B cell (primary cell): ENCODE measurements at regions of chr16 and their contacts with region 1.

Region 1: GRCh38 chr16:57576429-57576870 is 34.0 kb downstream of the ADGRG5 start:
- DNase-seq: peak; percentile 83
- ATAC-seq: peak; percentile 93
- H3K4me3 ChIP-seq: no peak overlapping the region
- H3K4me3 Mint-ChIP-seq: no peak overlapping the region
- H3K27ac ChIP-seq: no peak overlapping the region
- H3K27ac Mint-ChIP-seq: peak overlapping the region; percentile 39
- H3K4me1 ChIP-seq: peaks cover 0 to 7% of the 10 kb centered on the region in 2 donors
- H3K4me1 Mint-ChIP-seq: peaks cover 18% of the 10 kb centered on the region
- H3K27me3 ChIP-seq: no peaks in the 10 kb centered on the region
- H3K27me3 Mint-ChIP-seq: no peaks in the 10 kb centered on the region
- CTCF ChIP-seq: peak; percentile 95

Region 2: DNA sequence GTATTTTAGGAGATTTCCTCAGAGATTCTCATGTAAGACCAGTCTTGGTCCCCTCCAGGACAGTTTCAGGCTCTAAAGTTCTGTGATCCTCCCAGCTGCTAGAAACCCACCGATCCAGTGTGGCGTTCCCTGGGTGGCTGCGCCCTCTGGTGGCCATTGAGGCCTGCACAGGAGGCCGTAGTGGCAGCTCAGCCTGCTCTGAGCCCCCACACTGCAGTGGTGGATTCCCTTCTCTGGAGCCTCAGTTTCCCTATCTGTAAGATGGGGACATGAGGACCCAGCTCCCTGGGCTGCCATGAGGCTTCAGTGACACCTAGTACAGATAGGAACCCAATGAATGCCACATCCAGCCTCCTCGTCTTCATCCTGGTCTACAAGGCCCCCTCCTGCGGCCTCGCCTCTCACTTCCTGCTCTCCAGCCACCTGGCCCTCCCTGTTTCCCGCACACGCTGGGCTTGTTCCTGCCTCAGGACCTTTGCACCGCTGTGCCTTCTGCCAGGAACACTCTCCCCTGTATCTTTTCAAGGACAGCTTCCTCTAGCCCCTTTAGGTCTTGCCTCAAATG is 56.6 kb before region 1 on chr16:
- CTCF ChIA-PET with region 1: interaction called, 111 read pairs
- POLR2A ChIA-PET with region 1: interaction called, 3 read pairs
- intact Hi-C with region 1: loop called (anchors 1 kb)
- DNase-seq: peak; percentile 83
- ATAC-seq: peak; percentile 76
- H3K4me3 ChIP-seq: no peak overlapping the region
- H3K4me3 Mint-ChIP-seq: no peak overlapping the region
- H3K27ac ChIP-seq: no peak overlapping the region
- H3K27ac Mint-ChIP-seq: no peak overlapping the region
- H3K4me1 ChIP-seq: peaks cover 26 to 39% of the 10 kb centered on the region in 2 donors
- H3K4me1 Mint-ChIP-seq: peaks cover 38% of the 10 kb centered on the region
- H3K27me3 ChIP-seq: no peaks in the 10 kb centered on the region
- H3K27me3 Mint-ChIP-seq: no peaks in the 10 kb centered on the region
- CTCF ChIP-seq: peak; percentile 98

Region 3: DNA sequence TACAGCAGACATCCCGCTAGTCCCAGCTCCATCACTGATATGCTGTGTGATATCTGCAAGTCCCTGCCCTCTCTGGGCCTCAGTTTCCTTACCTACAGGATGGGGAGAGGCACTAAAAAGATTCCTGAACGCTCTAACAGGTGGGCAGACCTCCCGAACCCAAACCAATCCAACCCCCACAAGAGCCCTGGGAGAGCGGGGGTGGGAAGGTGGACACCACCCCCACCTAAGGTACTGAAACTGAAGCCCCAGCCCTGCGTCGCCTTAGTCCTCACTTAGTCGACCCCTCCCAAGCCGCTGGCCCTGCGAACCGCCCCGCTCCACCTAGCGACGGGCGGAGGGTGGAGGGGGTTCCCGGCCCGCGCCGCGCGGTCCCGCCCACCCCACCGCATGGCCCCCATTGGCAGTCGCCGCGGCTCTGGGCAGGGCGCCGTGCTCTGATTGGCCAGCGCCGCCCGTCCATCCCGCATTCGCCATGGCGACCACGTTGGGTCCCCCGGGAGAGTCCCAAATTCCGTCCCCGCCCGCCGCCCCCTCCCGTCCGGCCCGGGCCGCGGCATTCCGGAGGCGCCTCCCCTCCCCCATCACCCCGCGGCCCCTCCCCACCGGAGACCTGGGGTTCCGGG is 40.7 kb before region 1 on chr16:
- CTCF ChIA-PET with region 1: interaction called, 43 read pairs
- POLR2A ChIA-PET with region 1: interaction called, 4 read pairs
- intact Hi-C with region 1: loop called (anchors 1 kb)
- DNase-seq: peak; percentile 95
- ATAC-seq: peak; percentile 76
- H3K4me3 ChIP-seq: peak overlapping the region in 4 of 5 experiments; percentile 56 to 73 (median 70)
- H3K4me3 Mint-ChIP-seq: peak overlapping the region; percentile 89
- H3K27ac ChIP-seq: peak overlapping the region; percentile 90 to 94
- H3K27ac Mint-ChIP-seq: peak overlapping the region; percentile 96
- H3K4me1 ChIP-seq: peaks cover 86 to 91% of the 10 kb centered on the region in 2 donors
- H3K4me1 Mint-ChIP-seq: peaks cover 79% of the 10 kb centered on the region
- H3K27me3 ChIP-seq: no peaks in the 10 kb centered on the region
- H3K27me3 Mint-ChIP-seq: no peaks in the 10 kb centered on the region
- CTCF ChIP-seq: peak; percentile 29

Region 4: DNA sequence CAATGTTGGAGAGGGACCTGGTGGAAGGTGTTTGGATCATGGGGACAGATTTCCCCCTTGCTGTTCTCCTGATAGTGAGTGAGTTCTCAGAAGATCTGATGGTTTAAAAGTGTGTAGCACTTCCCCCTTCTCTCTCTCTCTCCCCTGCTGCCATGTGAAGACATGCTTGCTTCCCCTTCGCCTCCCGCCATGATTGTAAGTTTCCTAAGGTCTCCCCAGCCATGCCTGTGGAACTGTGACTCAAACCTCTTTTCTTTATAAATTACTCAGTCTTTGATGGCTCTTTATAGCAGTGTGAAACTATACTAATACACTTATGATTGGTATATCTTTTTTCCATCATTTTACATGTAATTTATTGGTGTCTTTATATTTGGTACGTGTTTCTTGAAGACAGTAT is 20.6 kb before region 1 on chr16:
- CTCF ChIA-PET with region 1: interaction called, 14 read pairs
- POLR2A ChIA-PET with region 1: no interaction called
- intact Hi-C with region 1: no loop called
- DNase-seq: no peak
- ATAC-seq: no peak
- H3K4me3 ChIP-seq: no peak overlapping the region
- H3K4me3 Mint-ChIP-seq: no peak overlapping the region
- H3K27ac ChIP-seq: no peak overlapping the region
- H3K27ac Mint-ChIP-seq: peak overlapping the region; percentile 43
- H3K4me1 ChIP-seq: peaks cover 15 to 21% of the 10 kb centered on the region in 2 donors
- H3K4me1 Mint-ChIP-seq: peaks cover 62% of the 10 kb centered on the region
- H3K27me3 ChIP-seq: no peaks in the 10 kb centered on the region
- H3K27me3 Mint-ChIP-seq: no peaks in the 10 kb centered on the region
- CTCF ChIP-seq: no peak

Region 5: DNA sequence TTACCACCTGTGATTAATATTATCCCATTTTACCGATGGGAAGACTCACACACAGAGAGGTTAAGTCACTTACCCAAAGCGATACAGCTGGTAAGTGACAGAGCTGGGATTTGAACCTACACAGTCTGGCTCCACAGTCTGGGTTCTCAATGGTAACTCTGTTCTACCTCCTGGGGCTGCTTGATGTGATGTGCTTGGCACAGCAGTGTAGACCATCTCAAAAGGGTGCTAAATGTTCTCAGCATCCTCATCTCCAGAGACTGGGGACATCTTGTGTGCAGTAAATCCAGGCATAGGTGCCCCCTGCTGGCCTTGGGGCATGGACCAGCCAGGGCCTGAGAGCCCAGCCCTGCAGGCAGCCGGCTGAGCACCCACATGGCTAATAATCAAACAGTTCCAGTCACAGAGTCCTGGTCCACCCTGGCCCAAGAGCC is 143.7 kb after region 1 on chr16:
- CTCF ChIA-PET with region 1: interaction called, 3 read pairs
- POLR2A ChIA-PET with region 1: no interaction called
- intact Hi-C with region 1: loop called (anchors 10 kb)
- DNase-seq: peak; percentile 50
- ATAC-seq: peak; percentile 47
- H3K4me3 ChIP-seq: no peak overlapping the region
- H3K4me3 Mint-ChIP-seq: no peak overlapping the region
- H3K27ac ChIP-seq: no peak overlapping the region
- H3K27ac Mint-ChIP-seq: no peak overlapping the region
- H3K4me1 ChIP-seq: peaks cover 0 to 3% of the 10 kb centered on the region in 2 donors
- H3K4me1 Mint-ChIP-seq: peaks cover 2% of the 10 kb centered on the region
- H3K27me3 ChIP-seq: peaks cover 0 to 3% (median 0%) of the 10 kb centered on the region in 4 experiments
- H3K27me3 Mint-ChIP-seq: peaks cover 5% of the 10 kb centered on the region
- CTCF ChIP-seq: peak; percentile 23